Mammary epithelial cell (primary cell): ENCODE measurements at regions of chr3 and their contacts with region 1.

Region 1: DNA sequence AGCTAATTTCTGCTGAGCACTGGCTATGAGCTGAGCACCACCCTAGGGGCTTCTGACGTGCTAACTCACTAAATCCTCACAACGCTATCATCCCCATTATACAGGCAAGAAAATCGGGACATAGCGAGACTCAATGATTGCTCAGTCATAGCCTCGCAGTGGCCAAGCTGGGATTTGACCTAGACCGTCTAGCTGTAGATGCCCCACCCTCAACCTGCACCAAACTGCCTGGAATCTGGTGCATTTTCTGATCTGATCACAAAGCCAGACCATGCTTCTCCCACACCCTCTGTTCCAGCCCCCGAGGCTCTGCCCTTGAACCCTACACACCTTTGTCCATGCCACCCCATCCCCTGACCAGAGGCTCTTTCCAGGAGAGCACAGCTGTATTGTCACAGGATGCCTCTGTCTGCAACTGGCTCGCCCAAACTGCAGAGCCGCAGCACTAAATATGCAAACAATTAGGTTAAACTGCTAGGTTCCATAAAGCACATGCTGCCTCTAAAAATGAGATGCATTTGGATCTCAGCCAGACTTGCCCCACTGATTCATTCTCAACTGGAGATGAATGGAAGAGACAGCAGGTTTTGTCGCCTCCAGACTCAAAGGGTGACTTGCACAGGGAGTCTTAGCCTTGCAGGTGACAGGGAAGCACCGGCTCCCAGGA is 95.2 kb downstream of the NUP210 start:
- DNase-seq: no peak
- H3K4me3 ChIP-seq: no peak overlapping the region
- H3K27ac ChIP-seq: no peak overlapping the region
- H3K4me1 ChIP-seq: no peaks in the 10 kb centered on the region
- H3K27me3 ChIP-seq: no peaks in the 10 kb centered on the region
- CTCF ChIP-seq: no peak

Region 2: GRCh38 chr3:13245615-13245978 is 79.4 kb before region 1 on chr3:
- CTCF ChIA-PET with region 1: no interaction called
- dilution Hi-C with region 1: loop called (anchors 5 kb)
- in situ Hi-C with region 1: no loop called
- intact Hi-C with region 1: no loop called
- DNase-seq: no peak
- H3K4me3 ChIP-seq: no peak overlapping the region
- H3K27ac ChIP-seq: no peak overlapping the region
- H3K4me1 ChIP-seq: peaks cover 10% of the 10 kb centered on the region
- H3K27me3 ChIP-seq: no peaks in the 10 kb centered on the region
- CTCF ChIP-seq: no peak

Region 3: GRCh38 chr3:13338231-13338630 is 13.3 kb after region 1 on chr3:
- CTCF ChIA-PET with region 1: no interaction called
- dilution Hi-C with region 1: no loop called
- in situ Hi-C with region 1: no loop called
- intact Hi-C with region 1: no loop called
- DNase-seq: no peak
- H3K4me3 ChIP-seq: no peak overlapping the region
- H3K27ac ChIP-seq: no peak overlapping the region
- H3K4me1 ChIP-seq: no peaks in the 10 kb centered on the region
- H3K27me3 ChIP-seq: no peaks in the 10 kb centered on the region
- CTCF ChIP-seq: no peak

Region 4: DNA sequence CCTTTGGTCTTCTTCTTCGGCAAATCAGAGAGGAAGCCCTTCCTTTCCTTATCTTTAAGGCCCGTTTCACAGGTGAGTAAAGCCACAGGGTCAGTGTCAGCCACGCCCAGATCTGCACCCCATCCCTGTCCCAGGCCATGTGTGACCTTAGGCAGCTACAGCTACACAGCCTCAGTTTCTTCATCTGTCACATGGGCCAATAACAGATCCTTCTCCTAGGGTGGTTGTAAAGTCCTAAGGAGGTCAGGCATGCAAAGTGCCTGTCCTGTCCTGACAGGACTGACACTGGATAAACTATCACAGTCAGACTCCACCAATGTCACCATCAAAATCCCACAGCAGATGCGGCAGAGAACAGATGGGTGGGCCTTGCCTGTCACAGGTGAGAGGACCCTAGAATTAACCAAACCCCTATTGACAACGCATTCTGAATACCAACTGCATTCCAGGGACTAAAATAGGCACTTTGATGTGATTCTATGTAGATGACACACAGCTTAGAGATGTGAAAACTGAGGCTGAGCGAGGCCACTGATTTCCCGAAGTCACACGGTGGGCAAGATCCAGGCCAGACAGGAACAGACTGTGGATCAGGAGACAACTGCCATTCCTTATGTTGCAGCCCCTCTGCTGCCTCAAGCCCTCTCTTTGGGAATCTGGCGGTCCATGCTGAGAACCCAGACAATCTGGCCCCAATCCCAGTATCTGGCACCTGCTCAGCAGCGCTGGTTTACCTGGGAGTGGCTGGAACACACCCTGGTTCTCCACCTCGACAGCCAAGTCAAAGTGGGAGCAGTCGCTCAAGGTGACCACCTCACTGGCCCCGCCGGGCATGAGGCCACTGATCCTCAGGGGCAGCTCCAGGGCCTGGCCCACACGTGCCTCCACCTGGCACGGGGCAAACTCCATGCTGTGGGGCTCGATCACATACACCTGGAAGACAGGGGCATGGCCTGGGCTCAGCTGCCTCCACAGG is 46.4 kb after region 1 on chr3:
- CTCF ChIA-PET with region 1: no interaction called
- dilution Hi-C with region 1: loop called (anchors 5 kb)
- in situ Hi-C with region 1: no loop called
- intact Hi-C with region 1: no loop called
- DNase-seq: no peak
- H3K4me3 ChIP-seq: no peak overlapping the region
- H3K27ac ChIP-seq: no peak overlapping the region
- H3K4me1 ChIP-seq: no peaks in the 10 kb centered on the region
- H3K27me3 ChIP-seq: no peaks in the 10 kb centered on the region
- CTCF ChIP-seq: no peak

Region 5: GRCh38 chr3:13419505-13420044 is 94.6 kb after region 1 on chr3:
- CTCF ChIA-PET with region 1: no interaction called
- dilution Hi-C with region 1: loop called (anchors 5 kb)
- in situ Hi-C with region 1: no loop called
- intact Hi-C with region 1: no loop called
- DNase-seq: no peak
- H3K4me3 ChIP-seq: peak overlapping the region in 2 of 3 experiments; percentile 22 to 23
- H3K27ac ChIP-seq: no peak overlapping the region
- H3K4me1 ChIP-seq: peaks cover 11% of the 10 kb centered on the region
- H3K27me3 ChIP-seq: peaks cover 13% of the 10 kb centered on the region
- CTCF ChIP-seq: no peak